ENCODE measurements at regions of chr3 and their contacts with region 1.

Region 1: DNA sequence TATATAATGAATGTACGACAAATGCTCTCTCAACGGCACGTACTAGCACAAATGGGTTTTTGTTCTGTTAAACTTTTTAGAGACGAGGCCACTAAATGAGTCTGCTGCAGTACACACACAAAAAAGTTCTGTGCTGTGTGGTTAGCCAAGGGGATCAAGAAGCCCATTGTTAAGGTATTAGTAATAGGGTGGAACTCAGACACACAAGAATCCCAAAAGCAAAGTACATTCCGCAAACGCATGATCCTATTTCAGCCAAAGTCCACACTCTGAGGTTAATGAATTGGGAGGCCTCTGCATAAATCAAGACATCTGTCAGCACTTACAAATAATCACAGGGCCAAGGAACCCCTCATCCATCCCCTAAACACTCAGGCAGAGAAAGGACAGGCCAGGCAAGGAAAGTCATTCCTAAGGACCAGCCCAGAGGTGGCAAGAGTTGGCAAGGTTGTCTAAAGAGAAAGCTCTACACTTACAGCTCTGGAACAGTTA is 12.1 kb downstream of the OSBPL10 start:
- DNase-seq: peak; percentile 86
- H3K4me3 Mint-ChIP-seq: peak overlapping the region; percentile 69
- H3K27ac Mint-ChIP-seq: peak overlapping the region; percentile 99
- H3K4me1 Mint-ChIP-seq: peaks cover 32% of the 10 kb centered on the region
- H3K27me3 Mint-ChIP-seq: no peaks in the 10 kb centered on the region
- CTCF ChIP-seq: no peak

Region 2: DNA sequence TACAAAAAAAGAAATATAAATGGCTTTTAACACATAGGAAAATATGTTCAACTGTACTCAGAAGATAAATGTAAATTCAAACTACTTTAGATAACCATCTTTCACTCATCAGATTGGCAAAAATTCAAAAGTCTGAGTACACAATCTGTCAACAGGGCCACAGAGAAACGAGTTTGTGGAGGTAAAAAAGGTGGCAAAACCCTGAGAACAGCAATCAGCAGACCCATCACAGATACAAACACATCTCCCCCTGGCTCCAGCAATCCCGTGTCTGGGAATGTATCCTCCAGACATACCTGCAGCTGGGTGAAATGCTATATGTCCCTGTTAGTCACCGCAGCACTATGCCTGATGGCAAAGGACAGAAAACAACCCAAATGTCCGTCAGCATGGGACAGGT is 137.4 kb before region 1 on chr3:
- CTCF ChIA-PET with region 1: no interaction called
- POLR2A ChIA-PET with region 1: no interaction called
- intact Hi-C with region 1: no loop called
- DNase-seq: no peak
- H3K4me3 Mint-ChIP-seq: no peak overlapping the region
- H3K27ac Mint-ChIP-seq: no peak overlapping the region
- H3K4me1 Mint-ChIP-seq: peaks cover 13% of the 10 kb centered on the region
- H3K27me3 Mint-ChIP-seq: no peaks in the 10 kb centered on the region
- CTCF ChIP-seq: no peak

Region 3: DNA sequence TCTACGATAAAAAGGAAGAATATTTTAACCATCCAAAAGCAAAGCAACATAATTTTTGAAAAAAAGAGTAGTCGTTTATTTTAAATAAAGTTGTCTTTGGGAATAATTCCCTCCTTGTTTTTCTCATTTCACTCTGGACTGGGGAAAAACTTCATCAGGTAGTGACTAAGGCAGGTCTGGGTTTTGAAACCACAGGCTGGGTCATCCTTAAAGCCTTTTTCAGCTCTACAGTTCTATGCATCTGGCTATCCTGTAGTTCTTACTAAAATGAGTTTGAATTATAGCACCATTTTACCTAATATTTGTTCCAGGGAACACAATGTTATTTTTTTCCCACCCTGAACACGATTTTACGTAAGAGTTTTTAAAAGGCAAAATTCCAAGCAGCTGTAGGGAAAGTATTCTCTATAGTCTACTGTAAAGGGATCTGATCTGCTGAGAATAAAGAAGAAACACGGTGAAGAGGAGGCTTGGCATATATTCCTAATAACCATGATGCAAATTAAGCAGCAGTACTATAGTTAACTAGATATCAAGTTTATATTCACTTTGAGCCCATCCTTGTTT is 95.6 kb before region 1 on chr3:
- CTCF ChIA-PET with region 1: no interaction called
- POLR2A ChIA-PET with region 1: interaction called, 11 read pairs
- intact Hi-C with region 1: loop called (anchors 1 kb)
- DNase-seq: peak; percentile 54
- H3K4me3 Mint-ChIP-seq: no peak overlapping the region
- H3K27ac Mint-ChIP-seq: peak overlapping the region; percentile 92
- H3K4me1 Mint-ChIP-seq: peaks cover 52% of the 10 kb centered on the region
- H3K27me3 Mint-ChIP-seq: no peaks in the 10 kb centered on the region
- CTCF ChIP-seq: no peak

Region 4: GRCh38 chr3:31918179-31919168 is 50.5 kb before region 1 on chr3:
- CTCF ChIA-PET with region 1: interaction called, 4 read pairs
- POLR2A ChIA-PET with region 1: interaction called, 15 read pairs
- intact Hi-C with region 1: no loop called
- DNase-seq: no peak
- H3K4me3 Mint-ChIP-seq: peak overlapping the region; percentile 43
- H3K27ac Mint-ChIP-seq: peak overlapping the region; percentile 78
- H3K4me1 Mint-ChIP-seq: peaks cover 55% of the 10 kb centered on the region
- H3K27me3 Mint-ChIP-seq: no peaks in the 10 kb centered on the region
- CTCF ChIP-seq: no peak

Measured in MCF 10A (cell line).